PC-3 (cell line): ENCODE measurements at regions of chr17 and their contacts with region 1.

Region 1: DNA sequence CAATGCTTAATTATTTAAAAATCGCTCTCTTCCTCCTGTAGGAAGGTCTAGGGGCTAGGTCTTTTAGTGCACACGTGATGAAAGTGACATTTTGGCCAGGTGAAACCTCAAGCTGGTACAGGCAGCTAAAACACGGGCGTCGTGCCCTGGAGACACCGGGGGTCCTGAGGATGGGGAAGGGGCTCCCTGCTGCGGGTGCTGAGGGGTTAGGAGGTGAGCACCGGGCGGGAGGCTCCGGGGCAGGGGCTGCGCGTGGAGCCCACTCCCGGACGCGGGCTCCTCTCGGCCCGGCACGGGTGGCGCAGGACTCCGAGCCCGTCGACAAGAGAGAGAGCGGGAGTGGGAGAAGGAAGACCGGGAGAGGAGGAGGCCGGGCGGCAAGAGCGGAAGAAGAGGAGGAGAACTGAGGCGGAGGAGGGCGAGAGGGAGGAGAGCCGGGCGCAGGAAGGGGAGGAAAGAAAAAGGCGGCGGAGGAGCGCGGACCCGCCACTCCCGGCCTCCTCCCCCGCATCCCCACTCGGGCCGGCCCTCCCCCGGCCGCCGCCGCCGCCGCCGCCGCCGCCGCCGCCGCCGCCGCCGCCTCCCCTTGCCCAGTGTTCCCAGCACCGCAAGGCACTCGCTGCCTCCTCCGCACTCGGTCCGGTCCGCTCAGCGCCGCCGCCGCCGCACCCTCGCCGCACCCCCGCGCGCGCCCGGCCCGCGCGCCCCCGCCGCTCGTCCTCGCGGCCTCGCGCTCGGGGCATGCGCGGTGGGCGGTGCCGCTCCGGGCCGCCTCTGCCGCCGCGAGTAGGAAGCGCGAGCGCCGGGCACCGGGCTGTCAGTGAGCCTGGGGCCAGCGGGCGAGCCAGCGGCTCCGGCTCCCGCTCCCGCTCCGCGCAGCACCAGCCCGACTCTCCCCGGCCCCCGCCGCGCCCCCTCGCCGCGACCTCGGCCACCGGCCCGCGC is at the start of gene PRKCA:
- DNase-seq: peak; percentile 87
- ATAC-seq: peak; percentile 78
- H3K4me3 ChIP-seq: peak within 1 kb of the TSS; percentile 94
- H3K27ac ChIP-seq: peak within 1 kb of the TSS; percentile 30
- H3K4me1 ChIP-seq: peaks cover 37% of the 10 kb centered on the region
- H3K27me3 ChIP-seq: no peaks in the 10 kb centered on the region
- CTCF ChIP-seq: no peak
- total RNA-seq, gene PRKCA: 22.6 and 28.2 TPM in 2 replicates

Region 2: DNA sequence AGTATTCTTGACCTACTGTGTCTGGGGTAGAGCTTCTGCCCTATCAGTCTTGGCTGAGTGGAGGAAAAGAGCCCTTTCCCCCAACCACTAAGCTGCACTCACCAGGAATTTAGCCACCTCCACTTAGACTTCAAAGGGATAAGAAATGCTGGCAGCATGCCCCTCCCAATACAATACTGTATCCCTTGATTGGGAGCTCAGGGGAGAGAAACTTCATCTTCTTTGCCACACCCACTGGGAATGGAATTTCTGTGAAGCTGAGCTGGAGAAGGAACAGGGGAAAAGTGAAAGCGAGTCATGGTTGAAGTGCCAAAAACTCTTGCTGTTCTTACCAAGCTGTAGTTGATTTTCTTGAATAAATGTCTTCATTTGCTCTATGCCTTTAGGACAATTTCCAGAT is 178.9 kb before region 1 on chr17:
- CTCF ChIA-PET with region 1: no interaction called
- POLR2A ChIA-PET with region 1: no interaction called
- intact Hi-C with region 1: no loop called
- DNase-seq: peak; percentile 52
- ATAC-seq: no peak
- H3K4me3 ChIP-seq: no peak overlapping the region
- H3K27ac ChIP-seq: no peak overlapping the region
- H3K4me1 ChIP-seq: no peaks in the 10 kb centered on the region
- H3K27me3 ChIP-seq: no peaks in the 10 kb centered on the region
- CTCF ChIP-seq: no peak

Region 3: GRCh38 chr17:66348584-66349165 is 46.6 kb after region 1 on chr17:
- CTCF ChIA-PET with region 1: no interaction called
- POLR2A ChIA-PET with region 1: interaction called, 5 read pairs
- intact Hi-C with region 1: loop called (anchors 2 kb)
- DNase-seq: peak; percentile 92
- ATAC-seq: peak; percentile 82
- H3K4me3 ChIP-seq: peak overlapping the region; percentile 51
- H3K27ac ChIP-seq: peak overlapping the region; percentile 90
- H3K4me1 ChIP-seq: peaks cover 62% of the 10 kb centered on the region
- H3K27me3 ChIP-seq: no peaks in the 10 kb centered on the region
- CTCF ChIP-seq: no peak

Region 4: GRCh38 chr17:66426397-66427033 is 124.4 kb after region 1 on chr17:
- CTCF ChIA-PET with region 1: no interaction called
- POLR2A ChIA-PET with region 1: no interaction called
- intact Hi-C with region 1: loop called (anchors 5 kb)
- DNase-seq: peak; percentile 66
- ATAC-seq: peak; percentile 78
- H3K4me3 ChIP-seq: no peak overlapping the region
- H3K27ac ChIP-seq: no peak overlapping the region
- H3K4me1 ChIP-seq: peaks cover 26% of the 10 kb centered on the region
- H3K27me3 ChIP-seq: no peaks in the 10 kb centered on the region
- CTCF ChIP-seq: peak; percentile 73

Region 5: DNA sequence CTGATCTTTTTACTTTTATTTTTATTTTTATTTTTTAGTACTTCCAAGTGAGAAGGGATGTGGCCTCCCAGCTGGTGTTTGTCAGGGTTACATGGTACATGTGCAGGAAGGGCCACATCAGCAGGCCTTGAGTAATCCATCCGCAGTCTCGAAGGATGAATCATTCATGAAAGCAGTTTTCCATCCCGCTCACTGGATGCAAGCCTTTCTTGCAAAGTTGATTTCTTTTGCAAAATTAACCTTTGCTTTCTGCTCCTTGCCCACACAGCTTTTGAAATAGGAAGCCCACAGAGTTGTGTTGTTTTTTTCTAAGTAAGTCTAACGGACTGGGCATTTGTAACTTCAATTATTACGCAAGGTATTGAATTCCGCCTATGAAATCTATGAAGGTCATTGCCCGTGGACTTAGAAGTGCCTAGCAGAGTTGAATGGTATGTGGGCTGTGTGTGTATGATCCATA is 157.8 kb after region 1 on chr17:
- CTCF ChIA-PET with region 1: interaction called, 5 read pairs
- POLR2A ChIA-PET with region 1: interaction called, 3 read pairs
- intact Hi-C with region 1: loop called (anchors 2 kb)
- DNase-seq: peak; percentile 97
- ATAC-seq: peak; percentile 91
- H3K4me3 ChIP-seq: peak overlapping the region; percentile 8; the same call in 1 of the 2 replicates
- H3K27ac ChIP-seq: peak overlapping the region; percentile 71
- H3K4me1 ChIP-seq: peaks cover 55% of the 10 kb centered on the region
- H3K27me3 ChIP-seq: no peaks in the 10 kb centered on the region
- CTCF ChIP-seq: no peak

Region 6: DNA sequence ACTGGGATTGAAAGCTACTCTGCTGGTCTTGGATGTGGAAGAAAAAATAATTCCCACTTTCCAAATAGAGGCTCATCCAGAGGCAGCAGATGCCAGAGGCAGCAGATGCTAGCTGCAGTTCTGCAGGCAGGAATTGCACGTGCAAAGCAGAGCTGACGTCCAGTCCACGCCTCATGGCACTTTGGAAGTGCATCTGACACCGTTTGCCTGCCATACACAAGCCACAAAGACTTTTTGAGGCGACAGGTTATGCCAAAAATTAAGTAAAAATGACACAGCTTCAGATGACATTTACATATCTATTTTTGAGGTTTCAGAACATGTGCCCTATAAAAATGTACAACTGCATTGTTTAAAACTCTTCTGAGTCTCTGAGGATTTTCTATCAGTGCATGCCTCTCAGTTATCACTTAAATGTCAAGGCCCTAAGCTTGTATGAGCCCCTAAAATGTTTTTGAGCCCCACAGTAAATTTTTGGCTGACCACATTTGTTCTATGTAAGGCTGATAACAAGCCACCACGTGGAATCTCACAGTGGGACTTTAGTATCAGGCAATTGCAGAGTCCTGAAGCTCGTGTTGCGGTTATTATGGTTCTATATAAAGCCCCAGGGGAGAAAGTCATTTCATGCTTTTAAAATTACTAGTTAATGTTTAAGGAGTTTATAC is 239.5 kb after region 1 on chr17:
- CTCF ChIA-PET with region 1: no interaction called
- POLR2A ChIA-PET with region 1: no interaction called
- intact Hi-C with region 1: loop called (anchors 10 kb)
- DNase-seq: peak; percentile 86
- ATAC-seq: peak; percentile 62
- H3K4me3 ChIP-seq: no peak overlapping the region
- H3K27ac ChIP-seq: peak overlapping the region; percentile 89
- H3K4me1 ChIP-seq: peaks cover 53% of the 10 kb centered on the region
- H3K27me3 ChIP-seq: no peaks in the 10 kb centered on the region
- CTCF ChIP-seq: no peak